ENCODE measurements at regions of chrX and their contacts with region 1.

Region 1: DNA sequence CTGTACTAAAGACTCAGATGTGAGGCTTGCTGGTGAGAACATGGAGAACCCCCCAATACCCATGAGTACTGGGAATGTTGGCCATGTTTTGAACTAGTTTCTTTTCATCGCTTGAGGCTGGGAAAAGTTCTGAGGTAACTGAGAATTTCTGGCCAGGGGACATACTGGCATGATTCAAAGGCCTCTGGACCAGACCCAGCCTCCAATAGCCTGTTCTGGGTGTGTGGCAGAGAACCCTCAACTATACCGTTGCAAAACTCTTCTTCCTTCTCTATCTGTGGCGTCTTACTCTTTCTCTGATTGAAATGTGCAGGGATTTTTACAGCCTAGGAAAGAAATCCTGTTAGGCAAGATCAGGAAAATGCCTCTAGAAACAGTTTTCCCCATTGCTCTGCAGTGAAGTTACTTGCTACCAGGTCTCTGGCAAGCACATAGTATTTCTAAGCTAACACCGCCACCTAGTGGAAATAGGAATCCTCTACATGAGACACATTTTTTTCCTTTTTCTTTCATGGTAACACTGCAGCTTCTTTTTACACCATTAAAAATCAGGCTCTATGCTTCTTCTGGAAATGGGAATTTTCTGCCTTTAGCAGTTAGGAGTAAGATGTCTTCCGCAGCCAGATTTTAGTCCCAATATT is 170.7 kb upstream of the ZCCHC13 start:
- DNase-seq: no peak
- H3K4me3 Mint-ChIP-seq: no peak overlapping the region
- H3K27ac Mint-ChIP-seq: no peak overlapping the region
- H3K4me1 Mint-ChIP-seq: no peaks in the 10 kb centered on the region
- H3K27me3 Mint-ChIP-seq: no peaks in the 10 kb centered on the region

Region 2: GRCh38 chrX:73855546-73855945 is 277.7 kb before region 1 on chrX:
- intact Hi-C with region 1: loop called (anchors 1 kb)
- DNase-seq: peak; percentile 18
- H3K4me3 Mint-ChIP-seq: no peak overlapping the region
- H3K27ac Mint-ChIP-seq: no peak overlapping the region
- H3K4me1 Mint-ChIP-seq: no peaks in the 10 kb centered on the region
- H3K27me3 Mint-ChIP-seq: no peaks in the 10 kb centered on the region

Region 3: GRCh38 chrX:73977534-73978169 is 155.6 kb before region 1 on chrX:
- intact Hi-C with region 1: no loop called
- DNase-seq: no peak
- H3K4me3 Mint-ChIP-seq: no peak overlapping the region
- H3K27ac Mint-ChIP-seq: peak overlapping the region; percentile 86
- H3K4me1 Mint-ChIP-seq: peaks cover 17% of the 10 kb centered on the region
- H3K27me3 Mint-ChIP-seq: no peaks in the 10 kb centered on the region

Region 4: DNA sequence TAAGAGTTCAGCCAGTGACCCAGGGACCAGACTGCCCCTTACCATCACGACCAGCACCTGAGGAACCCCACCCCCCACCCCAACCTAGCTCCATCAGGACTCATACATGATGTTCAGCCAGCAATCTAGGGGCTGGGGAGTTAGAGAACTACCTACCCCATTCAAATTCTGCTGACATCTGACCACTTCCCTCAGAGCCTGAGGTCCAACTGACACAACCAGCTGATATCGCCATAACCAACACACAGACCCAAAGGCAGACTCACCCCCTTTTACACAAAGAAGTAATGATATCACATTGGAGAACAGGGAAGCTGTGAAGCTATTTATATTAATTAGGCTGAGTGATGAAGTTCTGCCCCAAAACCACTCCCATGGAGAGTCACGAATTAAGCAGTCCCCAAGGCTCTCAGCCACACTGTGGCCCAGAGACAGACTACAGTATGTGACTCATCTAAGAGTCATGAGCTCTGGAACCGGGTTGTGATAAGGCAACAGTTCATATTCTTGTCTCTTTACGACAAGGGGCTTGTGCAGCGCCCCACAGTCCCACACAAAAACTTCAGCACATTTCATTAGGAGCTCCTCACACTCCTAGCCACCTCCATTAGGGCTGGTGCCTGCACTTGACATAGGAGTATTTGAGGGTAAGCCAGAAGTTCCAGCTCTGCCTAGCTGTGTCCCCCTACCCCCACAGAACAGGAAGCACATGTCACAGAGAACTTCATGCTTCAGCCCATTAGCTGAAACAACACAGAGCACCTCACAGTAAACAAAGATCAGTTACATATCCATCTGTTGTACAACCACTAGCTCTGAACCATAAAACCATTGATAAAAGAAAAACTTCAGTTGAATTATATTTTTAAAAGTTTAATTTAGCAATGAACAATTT is 14.0 kb before region 1 on chrX:
- intact Hi-C with region 1: no loop called
- DNase-seq: no peak
- H3K4me3 Mint-ChIP-seq: no peak overlapping the region
- H3K27ac Mint-ChIP-seq: no peak overlapping the region
- H3K4me1 Mint-ChIP-seq: no peaks in the 10 kb centered on the region
- H3K27me3 Mint-ChIP-seq: no peaks in the 10 kb centered on the region

Region 5: DNA sequence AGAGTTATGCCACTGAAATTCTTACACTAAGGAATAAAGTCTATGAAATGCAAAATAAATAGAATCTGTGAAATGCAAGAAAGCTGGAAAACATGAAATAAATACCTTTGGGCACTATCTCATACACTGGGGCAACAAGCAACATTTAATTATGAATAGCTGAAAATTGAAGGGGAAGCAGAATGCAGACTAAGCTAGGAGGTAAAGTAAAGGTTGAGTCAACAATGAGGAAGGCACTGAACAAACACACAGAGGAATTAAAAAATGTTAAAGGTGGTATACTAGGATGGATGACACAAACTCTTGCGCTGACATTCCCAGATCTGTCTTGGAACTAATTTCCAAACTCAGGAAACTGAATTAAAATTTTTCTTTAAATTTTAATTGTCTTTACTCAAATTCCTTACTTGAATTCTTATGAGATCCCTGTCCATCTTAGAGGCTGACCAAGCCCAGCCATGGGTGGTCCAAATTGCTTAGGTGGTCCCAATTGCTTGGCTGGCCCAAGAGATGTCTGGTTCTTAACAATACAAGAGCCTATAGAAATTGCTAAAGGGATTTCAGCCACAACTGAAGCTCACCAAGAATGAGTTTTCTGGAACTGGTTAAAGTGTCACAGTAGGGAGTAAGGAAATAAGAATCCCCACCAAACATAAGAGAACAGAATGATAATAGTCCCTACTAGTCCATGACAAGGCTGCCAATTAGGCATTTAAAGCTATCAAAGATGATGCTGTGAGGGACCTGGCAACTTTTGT is 129.4 kb after region 1 on chrX:
- intact Hi-C with region 1: no loop called
- DNase-seq: no peak
- H3K4me3 Mint-ChIP-seq: no peak overlapping the region
- H3K27ac Mint-ChIP-seq: no peak overlapping the region
- H3K4me1 Mint-ChIP-seq: no peaks in the 10 kb centered on the region
- H3K27me3 Mint-ChIP-seq: no peaks in the 10 kb centered on the region

Measured in activated T-helper 2 cell treated with anti-CD3 and anti-CD28 coated beads, Interferon-gamma antibody, Interleukin-2, Interleukin-4, amounts not matched to agents 10 μg/mL and 5 μg/mL and 100 μg/mL, durations not matched to agents 14 hours and 24 hours and 36 hours (primary cell).